Mammary epithelial cell (primary cell): ENCODE measurements at regions of chr3 and their contacts with region 1.

Region 1: GRCh38 chr3:36763850-36764703 is at the start of gene DCLK3:
- DNase-seq: no peak
- H3K4me3 ChIP-seq: peak within 1 kb of the TSS in 2 of 3 experiments; percentile 9 to 24
- H3K27ac ChIP-seq: no peak within 1 kb of the TSS
- H3K4me1 ChIP-seq: no peaks in the 10 kb centered on the region
- H3K27me3 ChIP-seq: peaks cover 37% of the 10 kb centered on the region
- CTCF ChIP-seq: no peak
- total RNA-seq, gene DCLK3: not detected

Region 2: GRCh38 chr3:36729204-36730056 is 34.6 kb before region 1 on chr3:
- CTCF ChIA-PET with region 1: no interaction called
- dilution Hi-C with region 1: no loop called
- in situ Hi-C with region 1: no loop called
- intact Hi-C with region 1: no loop called
- DNase-seq: peak; percentile 28
- H3K4me3 ChIP-seq: no peak overlapping the region
- H3K27ac ChIP-seq: no peak overlapping the region
- H3K4me1 ChIP-seq: no peaks in the 10 kb centered on the region
- H3K27me3 ChIP-seq: no peaks in the 10 kb centered on the region
- CTCF ChIP-seq: peak; percentile 66 to 69

Region 3: GRCh38 chr3:36933540-36934296 is 169.6 kb after region 1 on chr3:
- CTCF ChIA-PET with region 1: no interaction called
- dilution Hi-C with region 1: no loop called
- in situ Hi-C with region 1: no loop called
- intact Hi-C with region 1: no loop called
- DNase-seq: no peak
- H3K4me3 ChIP-seq: no peak overlapping the region
- H3K27ac ChIP-seq: no peak overlapping the region
- H3K4me1 ChIP-seq: peaks cover 9% of the 10 kb centered on the region
- H3K27me3 ChIP-seq: no peaks in the 10 kb centered on the region
- CTCF ChIP-seq: no peak

Region 4: DNA sequence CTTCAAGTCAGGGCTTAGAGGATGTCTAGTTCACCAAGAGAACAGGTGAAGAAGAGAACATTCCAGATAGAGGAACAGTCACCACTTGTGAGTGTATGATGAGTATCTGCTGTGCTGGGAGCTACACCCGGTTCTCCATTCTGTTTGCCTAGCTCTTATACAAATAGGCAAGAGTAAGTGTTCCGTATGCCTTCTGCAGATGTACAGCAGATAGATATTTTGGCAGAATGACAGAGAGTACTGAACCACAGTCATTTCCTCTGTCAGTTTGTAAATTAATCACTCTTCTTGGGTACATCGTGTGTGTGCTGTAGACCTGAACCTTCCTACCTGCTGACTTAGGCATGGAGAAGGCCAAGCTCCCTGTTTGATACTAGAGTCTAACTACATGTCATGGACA is 989.4 kb after region 1 on chr3:
- CTCF ChIA-PET with region 1: interaction called, 11 read pairs
- dilution Hi-C with region 1: no loop called
- in situ Hi-C with region 1: no loop called
- intact Hi-C with region 1: no loop called
- DNase-seq: peak; percentile 35
- H3K4me3 ChIP-seq: no peak overlapping the region
- H3K27ac ChIP-seq: no peak overlapping the region
- H3K4me1 ChIP-seq: no peaks in the 10 kb centered on the region
- H3K27me3 ChIP-seq: no peaks in the 10 kb centered on the region
- CTCF ChIP-seq: no peak